ENCODE measurements at regions of chr19 and their contacts with region 1.

Region 1: GRCh38 chr19:11924886-11925650 is at the start of gene ZNF700:
- DNase-seq: peak; percentile 67 to 93 (median 90)
- ATAC-seq: peak; percentile 94
- H3K4me3 ChIP-seq: peak within 1 kb of the TSS; percentile 98
- H3K4me3 Mint-ChIP-seq: peak within 1 kb of the TSS; percentile 91 to 99 (median 98)
- H3K27ac ChIP-seq: peak within 1 kb of the TSS; percentile 75
- H3K27ac Mint-ChIP-seq: peak within 1 kb of the TSS; percentile 93 to 99 (median 98)
- H3K4me1 ChIP-seq: peaks cover 6 to 10% of the 10 kb centered on the region in 2 donors
- H3K4me1 Mint-ChIP-seq: peaks cover 26 to 56% (median 39%) of the 10 kb centered on the region in 7 donors
- H3K27me3 ChIP-seq: no peaks in the 10 kb centered on the region
- H3K27me3 Mint-ChIP-seq: no peaks in the 10 kb centered on the region
- total RNA-seq, gene ZNF700: 18.0 to 26.4 (median 22.8) TPM

Region 2: GRCh38 chr19:11814029-11814699 is 110.9 kb before region 1 on chr19 and contains the start of gene ZNF440:
- CTCF ChIA-PET with region 1: no interaction called
- POLR2A ChIA-PET with region 1: no interaction called
- intact Hi-C with region 1: loop called (anchors 5 kb)
- DNase-seq: peak; percentile 65 to 88 (median 73)
- ATAC-seq: peak; percentile 99
- H3K4me3 ChIP-seq: peak within 1 kb of the TSS; percentile 94
- H3K4me3 Mint-ChIP-seq: peak within 1 kb of the TSS; percentile 85 to 96 (median 92)
- H3K27ac ChIP-seq: peak within 1 kb of the TSS; percentile 66
- H3K27ac Mint-ChIP-seq: peak within 1 kb of the TSS; percentile 72 to 90 (median 81)
- H3K4me1 ChIP-seq: peaks cover 0 to 4% of the 10 kb centered on the region in 2 donors
- H3K4me1 Mint-ChIP-seq: peaks cover 10 to 39% (median 19%) of the 10 kb centered on the region in 7 donors
- H3K27me3 ChIP-seq: no peaks in the 10 kb centered on the region
- H3K27me3 Mint-ChIP-seq: no peaks in the 10 kb centered on the region
- total RNA-seq, gene ZNF440: 10.4 to 19.5 (median 16.0) TPM

Region 3: GRCh38 chr19:11887611-11888531 is 37.2 kb before region 1 on chr19 and contains the start of gene ZNF69:
- CTCF ChIA-PET with region 1: interaction called, 6 read pairs
- POLR2A ChIA-PET with region 1: interaction called, 3 read pairs
- intact Hi-C with region 1: loop called in 1 of 2 experiments (anchors 1 kb)
- DNase-seq: peak; percentile 25 to 64 (median 55)
- ATAC-seq: peak; percentile 87
- H3K4me3 ChIP-seq: peak within 1 kb of the TSS; percentile 86
- H3K4me3 Mint-ChIP-seq: peak within 1 kb of the TSS; percentile 88 to 95 (median 94)
- H3K27ac ChIP-seq: peak within 1 kb of the TSS; percentile 71
- H3K27ac Mint-ChIP-seq: peak within 1 kb of the TSS; percentile 85 to 92 (median 90)
- H3K4me1 ChIP-seq: peaks cover 5 to 9% of the 10 kb centered on the region in 2 donors
- H3K4me1 Mint-ChIP-seq: peaks cover 20 to 42% (median 27%) of the 10 kb centered on the region in 7 donors
- H3K27me3 ChIP-seq: no peaks in the 10 kb centered on the region
- H3K27me3 Mint-ChIP-seq: peaks cover 0 to 3% (median 0%) of the 10 kb centered on the region in 5 donors
- total RNA-seq, gene ZNF69: 1.4 to 12.1 (median 5.0) TPM

Region 4: DNA sequence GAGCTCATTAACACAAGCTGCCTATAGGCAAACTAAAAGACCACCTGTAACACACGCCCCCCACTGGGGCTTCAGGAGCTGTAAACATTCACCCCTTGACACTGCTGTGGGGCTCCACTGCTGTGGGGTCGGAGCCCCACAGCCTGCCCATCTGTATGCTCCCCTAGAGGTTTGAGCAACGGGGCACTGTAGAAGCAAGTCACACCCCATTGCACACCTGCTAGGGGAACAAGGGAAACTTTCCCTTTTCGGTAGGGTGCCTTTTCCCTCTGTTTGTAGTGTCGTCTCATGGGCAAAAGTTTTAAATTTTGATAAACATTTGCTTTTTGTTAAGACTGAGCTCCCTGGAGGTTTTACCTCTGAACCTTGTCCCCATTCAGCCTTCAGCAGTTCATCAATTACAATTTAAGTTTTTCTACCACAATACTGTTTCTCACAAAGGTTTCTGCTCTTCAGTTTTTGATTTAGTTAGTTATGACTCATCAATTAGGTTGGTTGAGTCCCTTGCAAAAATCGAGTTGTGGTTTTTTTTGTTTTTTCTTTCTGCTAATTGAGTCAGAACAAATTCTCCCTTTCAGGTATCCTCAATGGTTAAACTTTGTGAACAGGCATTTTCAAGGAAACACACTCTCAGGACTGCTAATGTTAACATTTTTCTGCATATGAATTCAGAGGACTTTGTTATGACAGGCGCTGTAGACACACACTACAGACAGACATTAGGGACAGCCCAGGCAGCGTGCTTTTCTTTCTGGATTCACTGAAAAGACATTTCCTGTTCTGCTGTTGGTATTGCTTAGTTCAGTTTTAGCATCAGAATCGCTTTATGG is 75.3 kb after region 1 on chr19:
- CTCF ChIA-PET with region 1: no interaction called
- POLR2A ChIA-PET with region 1: no interaction called
- intact Hi-C with region 1: no loop called
- DNase-seq: no peak
- ATAC-seq: no peak
- H3K4me3 ChIP-seq: no peak overlapping the region
- H3K4me3 Mint-ChIP-seq: peak overlapping the region in 1 of 10 donors; percentile 44
- H3K27ac ChIP-seq: no peak overlapping the region
- H3K27ac Mint-ChIP-seq: peak overlapping the region in 3 of 9 donors; percentile 4 to 63 (median 25)
- H3K4me1 ChIP-seq: no peaks in the 10 kb centered on the region
- H3K4me1 Mint-ChIP-seq: peaks cover 12 to 29% (median 23%) of the 10 kb centered on the region in 7 donors
- H3K27me3 ChIP-seq: no peaks in the 10 kb centered on the region
- H3K27me3 Mint-ChIP-seq: no peaks in the 10 kb centered on the region

Region 5: GRCh38 chr19:12064590-12065538 is 139.8 kb after region 1 on chr19 and contains the start of gene ZNF844:
- CTCF ChIA-PET with region 1: interaction called, 12 read pairs
- POLR2A ChIA-PET with region 1: interaction called, 7 read pairs
- intact Hi-C with region 1: no loop called
- DNase-seq: peak; percentile 35 to 77 (median 67)
- ATAC-seq: peak; percentile 97
- H3K4me3 ChIP-seq: peak within 1 kb of the TSS; percentile 81
- H3K4me3 Mint-ChIP-seq: peak within 1 kb of the TSS; percentile 74 to 93 (median 90)
- H3K27ac ChIP-seq: peak within 1 kb of the TSS; percentile 70
- H3K27ac Mint-ChIP-seq: peak within 1 kb of the TSS; percentile 63 to 93 (median 84)
- H3K4me1 ChIP-seq: peaks cover 0 to 7% of the 10 kb centered on the region in 2 donors
- H3K4me1 Mint-ChIP-seq: peaks cover 0 to 19% (median 12%) of the 10 kb centered on the region in 7 donors
- H3K27me3 ChIP-seq: no peaks in the 10 kb centered on the region
- H3K27me3 Mint-ChIP-seq: no peaks in the 10 kb centered on the region
- total RNA-seq, gene ZNF844: 1.0 to 20.9 (median 15.8) TPM

Region 6: DNA sequence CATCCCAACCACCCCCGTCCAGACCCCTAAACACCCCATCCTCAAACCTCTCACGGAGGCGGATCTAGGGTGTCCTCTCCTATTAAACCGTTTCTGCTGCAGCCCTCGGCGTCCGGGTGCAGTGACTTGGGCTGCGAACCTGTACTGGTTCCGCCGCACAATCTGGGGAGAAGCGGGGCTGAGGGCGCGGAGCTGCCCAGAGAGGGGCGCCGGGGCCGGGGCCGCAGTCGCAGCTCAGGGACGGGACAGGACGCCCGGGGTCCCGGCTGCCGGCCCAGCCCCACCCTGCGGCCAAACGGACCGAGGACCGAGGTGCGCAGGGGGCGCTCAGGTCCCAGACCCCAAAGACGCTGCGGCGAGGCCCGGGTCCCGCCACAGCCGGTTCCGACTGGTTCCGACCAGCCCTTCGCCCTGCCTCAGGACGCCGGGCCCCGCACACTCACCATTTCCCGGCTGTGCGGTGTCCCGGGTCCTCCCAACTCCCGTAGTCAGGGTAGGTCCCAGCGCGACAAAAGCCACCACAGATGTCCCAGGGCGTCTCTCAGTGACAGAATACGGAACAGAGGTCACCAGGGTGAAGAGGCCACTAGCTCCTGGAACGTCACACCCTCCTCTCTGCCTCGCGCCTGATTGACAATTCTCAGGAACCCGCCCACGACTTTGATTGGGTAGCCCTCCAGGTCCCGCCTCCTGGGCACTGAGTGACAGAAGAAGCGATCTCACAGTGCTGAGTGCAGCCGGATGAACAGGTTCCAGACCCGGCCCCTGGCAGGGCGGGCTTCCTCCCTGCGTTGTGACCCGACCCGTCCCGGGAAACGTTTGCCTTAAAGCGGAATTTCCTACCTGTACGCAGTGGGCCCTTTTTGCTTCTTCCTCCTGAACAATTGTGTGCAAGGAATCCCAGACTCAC is 369.4 kb after region 1 on chr19 and contains the start of gene ZNF44:
- CTCF ChIA-PET with region 1: no interaction called
- POLR2A ChIA-PET with region 1: interaction called, 3 read pairs
- intact Hi-C with region 1: loop called in 1 of 2 experiments (anchors 10 kb)
- DNase-seq: peak; percentile 77 to 96 (median 93)
- ATAC-seq: peak; percentile 99
- H3K4me3 ChIP-seq: peak within 1 kb of the TSS; percentile 99
- H3K4me3 Mint-ChIP-seq: peak within 1 kb of the TSS; percentile 89 to 99 (median 99)
- H3K27ac ChIP-seq: peak within 1 kb of the TSS; percentile 90
- H3K27ac Mint-ChIP-seq: peak within 1 kb of the TSS; percentile 93 to 99 (median 97)
- H3K4me1 ChIP-seq: peaks cover 13 to 20% of the 10 kb centered on the region in 2 donors
- H3K4me1 Mint-ChIP-seq: peaks cover 25 to 52% (median 36%) of the 10 kb centered on the region in 7 donors
- H3K27me3 ChIP-seq: no peaks in the 10 kb centered on the region
- H3K27me3 Mint-ChIP-seq: no peaks in the 10 kb centered on the region
- total RNA-seq, gene ZNF44: 16.3 to 67.4 (median 31.3) TPM

Region 7: GRCh38 chr19:12610540-12611360 is 685.7 kb after region 1 on chr19 and contains the starts of genes ZNF490 and ZNF791:
- CTCF ChIA-PET with region 1: no interaction called
- POLR2A ChIA-PET with region 1: no interaction called
- intact Hi-C with region 1: loop called in 1 of 2 experiments (anchors 2 kb)
- DNase-seq: peak; percentile 81 to 97 (median 94)
- ATAC-seq: peak; percentile 94
- H3K4me3 ChIP-seq: peak within 1 kb of the TSS; percentile 71
- H3K4me3 Mint-ChIP-seq: peak within 1 kb of the TSS; percentile 94 to 100 (median 100)
- H3K27ac ChIP-seq: peak within 1 kb of the TSS; percentile 95
- H3K27ac Mint-ChIP-seq: peak within 1 kb of the TSS; percentile 97 to 100 (median 99)
- H3K4me1 ChIP-seq: peaks cover 24 to 41% of the 10 kb centered on the region in 2 donors
- H3K4me1 Mint-ChIP-seq: peaks cover 16 to 48% (median 36%) of the 10 kb centered on the region in 7 donors
- H3K27me3 ChIP-seq: no peaks in the 10 kb centered on the region
- H3K27me3 Mint-ChIP-seq: no peaks in the 10 kb centered on the region
- total RNA-seq, gene ZNF490: 10.3 to 14.9 (median 11.6) TPM
- total RNA-seq, gene ZNF791: 29.1 to 53.3 (median 38.7) TPM

Measured in naive thymus-derived CD4-positive, alpha-beta T cell (primary cell).